AG04450 (cell line): ENCODE measurements at regions of chr2 and their contacts with region 1.

Region 1: DNA sequence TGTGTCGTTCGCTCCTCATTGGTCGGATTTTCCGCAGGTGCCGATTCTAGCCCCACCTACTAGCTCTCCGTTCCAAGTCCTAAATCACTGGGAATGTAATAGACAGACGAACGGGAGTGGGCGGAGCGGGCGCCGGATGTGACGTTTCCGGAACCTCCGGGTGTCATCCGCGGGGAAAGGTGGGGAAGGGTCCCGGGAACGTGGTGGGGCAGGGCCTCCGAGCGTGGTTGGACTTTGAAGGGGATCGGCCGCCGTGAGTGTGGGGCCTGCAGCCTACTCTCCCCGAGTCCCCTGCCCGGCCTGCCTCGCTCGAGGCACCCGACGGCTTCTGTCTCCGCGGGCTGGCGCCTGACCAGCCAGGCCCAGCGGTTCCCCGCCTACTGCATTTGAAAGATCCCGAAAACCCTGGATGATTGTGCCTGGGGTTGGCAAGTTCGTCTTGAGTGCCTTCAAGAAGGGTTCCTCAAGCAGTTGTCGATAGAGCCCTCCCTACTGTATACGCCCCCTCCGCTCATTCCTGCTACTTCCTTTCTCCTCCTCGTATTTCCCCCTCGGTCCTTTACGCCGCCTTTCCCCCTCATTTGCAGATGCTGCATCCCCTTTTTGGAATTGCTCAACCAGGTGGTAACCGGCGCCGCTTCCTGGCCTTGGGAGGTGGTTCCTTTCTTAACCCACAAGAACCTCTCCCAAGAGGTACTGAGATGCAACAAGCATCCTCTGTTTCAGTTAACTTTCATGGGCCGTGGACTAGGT is at the start of gene STAMBP:
- DNase-seq: peak; percentile 87
- H3K4me3 ChIP-seq: peak within 1 kb of the TSS; percentile 77
- H3K27ac ChIP-seq: peak within 1 kb of the TSS; percentile 95
- H3K27me3 ChIP-seq: no peaks in the 10 kb centered on the region
- CTCF ChIP-seq: no peak
- polyA plus RNA-seq, gene STAMBP: 48.3 and 54.5 TPM in 2 replicates

Region 2: DNA sequence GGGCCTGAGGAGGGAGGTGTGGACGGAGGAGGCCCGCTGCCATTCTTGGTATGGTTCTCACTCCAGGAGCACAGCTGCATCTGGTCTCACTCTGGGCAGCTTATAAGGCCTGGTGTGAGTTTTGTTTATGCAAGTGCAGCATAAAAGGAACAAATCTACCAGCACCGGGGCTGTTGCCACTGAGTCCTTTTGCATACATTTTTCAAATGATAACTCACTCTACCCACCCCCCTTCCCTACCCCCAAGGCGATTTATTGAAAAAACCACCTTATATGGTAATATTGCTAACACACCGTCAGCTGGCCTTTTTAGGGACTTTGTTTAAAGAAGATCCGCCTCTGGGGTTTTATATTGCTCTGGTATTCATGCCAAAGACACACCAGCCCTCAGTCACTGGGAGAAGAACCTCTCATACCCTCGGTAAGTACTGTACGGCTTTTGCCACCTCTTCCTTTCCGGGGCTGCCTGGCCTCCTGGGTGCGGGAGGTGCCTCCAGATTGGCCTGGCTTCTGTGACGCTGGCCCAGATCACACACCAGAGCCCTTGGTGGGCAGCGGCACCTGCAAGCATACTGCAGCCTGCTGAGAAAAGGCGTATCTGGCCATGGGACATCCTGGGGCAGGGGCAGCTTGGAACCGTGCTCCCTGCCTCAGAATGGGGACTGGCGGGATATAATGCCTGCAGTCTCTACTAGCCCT is 63.8 kb after region 1 on chr2 and contains the start of gene ACTG2:
- CTCF ChIA-PET with region 1: interaction called, 13 read pairs
- POLR2A ChIA-PET with region 1: interaction called, 10 read pairs
- DNase-seq: peak; percentile 84
- H3K4me3 ChIP-seq: peak within 1 kb of the TSS; percentile 70
- H3K27ac ChIP-seq: peak within 1 kb of the TSS; percentile 92
- H3K27me3 ChIP-seq: no peaks in the 10 kb centered on the region
- CTCF ChIP-seq: no peak
- polyA plus RNA-seq, gene ACTG2: 641 and 956 TPM in 2 replicates

Region 3: DNA sequence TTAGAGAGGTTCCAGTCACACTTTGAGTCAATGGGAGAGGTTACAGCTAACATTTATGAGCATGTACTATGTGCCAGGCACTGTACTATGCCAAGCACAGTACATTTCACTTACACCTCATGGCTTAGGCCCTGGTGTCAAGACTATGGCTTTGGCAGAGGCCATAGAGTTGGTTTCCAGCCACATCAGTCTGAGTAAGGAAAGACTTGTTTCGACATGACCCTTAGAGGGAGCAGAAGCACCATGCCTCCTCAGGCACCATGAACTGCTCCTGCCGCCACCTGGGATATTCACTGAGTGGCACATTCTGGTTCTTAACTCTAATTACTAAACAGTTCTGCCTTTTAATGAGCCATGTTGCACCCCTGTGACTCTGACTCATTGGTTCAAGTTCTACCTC is 110.4 kb after region 1 on chr2:
- CTCF ChIA-PET with region 1: interaction called, 10 read pairs
- POLR2A ChIA-PET with region 1: no interaction called
- DNase-seq: no peak
- H3K4me3 ChIP-seq: no peak overlapping the region
- H3K27ac ChIP-seq: peak overlapping the region; percentile 39
- H3K27me3 ChIP-seq: no peaks in the 10 kb centered on the region
- CTCF ChIP-seq: peak; percentile 20; the same call in 1 of the 2 replicates

Region 4: DNA sequence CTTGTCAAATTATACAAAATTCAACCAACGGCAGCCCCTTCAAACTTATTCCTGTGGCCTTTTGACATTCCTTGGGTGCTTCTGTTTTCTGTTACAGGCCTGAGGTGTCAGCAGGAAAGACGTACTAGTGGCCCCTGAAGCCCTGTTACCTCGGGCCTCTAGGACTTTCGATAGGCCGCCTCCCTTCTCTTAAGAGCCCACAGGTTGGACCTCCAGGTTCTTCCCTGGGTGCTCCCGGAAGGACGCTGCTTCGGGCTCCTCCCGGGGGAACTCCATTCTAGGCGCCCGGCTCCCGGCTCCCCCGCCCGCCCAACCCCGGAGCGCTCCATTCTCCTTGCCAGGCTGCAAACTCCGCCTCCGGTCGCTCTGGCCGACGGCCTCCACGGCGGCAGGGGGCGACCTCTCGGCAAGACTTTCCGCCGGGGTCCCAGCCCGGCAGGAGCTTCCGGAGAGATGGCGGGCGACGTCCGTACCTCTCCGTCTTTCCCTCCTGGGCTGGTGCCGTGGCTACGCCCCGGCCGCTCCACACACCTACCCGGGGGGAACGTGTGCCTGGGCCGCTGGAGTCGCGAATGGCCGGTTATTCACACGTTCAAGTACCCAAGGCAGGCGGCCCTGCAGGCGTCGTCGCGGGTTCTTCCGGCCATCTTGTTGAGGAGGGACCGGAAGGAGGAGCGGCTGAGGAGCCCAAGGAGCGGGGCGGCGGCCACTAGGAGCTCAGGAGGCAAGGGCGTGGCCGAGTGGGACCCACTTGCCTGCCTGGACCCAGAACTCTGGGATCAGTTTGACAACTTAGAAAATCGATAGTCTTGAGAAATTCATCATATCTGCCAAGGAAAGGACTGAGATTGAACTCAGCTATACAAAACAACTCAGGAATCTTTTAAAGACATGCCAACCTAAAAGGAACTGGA is 291.2 kb after region 1 on chr2:
- CTCF ChIA-PET with region 1: interaction called, 17 read pairs
- POLR2A ChIA-PET with region 1: no interaction called
- DNase-seq: peak; percentile 58
- H3K4me3 ChIP-seq: peak overlapping the region; percentile 74
- H3K27ac ChIP-seq: peak overlapping the region; percentile 89
- H3K27me3 ChIP-seq: no peaks in the 10 kb centered on the region
- CTCF ChIP-seq: peak; percentile 55

Region 5: GRCh38 chr2:74155830-74156229 is 326.8 kb after region 1 on chr2:
- CTCF ChIA-PET with region 1: interaction called, 30 read pairs
- POLR2A ChIA-PET with region 1: interaction called, 3 read pairs
- DNase-seq: no peak
- H3K4me3 ChIP-seq: no peak overlapping the region
- H3K27ac ChIP-seq: no peak overlapping the region
- H3K27me3 ChIP-seq: no peaks in the 10 kb centered on the region
- CTCF ChIP-seq: no peak

Region 6: GRCh38 chr2:74334931-74335333 is 505.9 kb after region 1 on chr2:
- CTCF ChIA-PET with region 1: interaction called, 43 read pairs
- POLR2A ChIA-PET with region 1: no interaction called
- DNase-seq: peak; percentile 42
- H3K4me3 ChIP-seq: no peak overlapping the region
- H3K27ac ChIP-seq: no peak overlapping the region
- H3K27me3 ChIP-seq: peaks cover 19% of the 10 kb centered on the region
- CTCF ChIP-seq: peak; percentile 95